Panc1 (cell line): ENCODE measurements at regions of chr14 and their contacts with region 1.

Region 1: GRCh38 chr14:30906752-30907658 is 32.6 kb downstream of the COCH start:
- DNase-seq: peak; percentile 4
- ATAC-seq: no peak
- H3K4me3 ChIP-seq: no peak overlapping the region
- H3K27ac ChIP-seq: no peak overlapping the region
- H3K4me1 ChIP-seq: no peaks in the 10 kb centered on the region
- H3K27me3 ChIP-seq: no peaks in the 10 kb centered on the region
- CTCF ChIP-seq: peak; percentile 19; the same call in 1 of the 2 replicates

Region 2: DNA sequence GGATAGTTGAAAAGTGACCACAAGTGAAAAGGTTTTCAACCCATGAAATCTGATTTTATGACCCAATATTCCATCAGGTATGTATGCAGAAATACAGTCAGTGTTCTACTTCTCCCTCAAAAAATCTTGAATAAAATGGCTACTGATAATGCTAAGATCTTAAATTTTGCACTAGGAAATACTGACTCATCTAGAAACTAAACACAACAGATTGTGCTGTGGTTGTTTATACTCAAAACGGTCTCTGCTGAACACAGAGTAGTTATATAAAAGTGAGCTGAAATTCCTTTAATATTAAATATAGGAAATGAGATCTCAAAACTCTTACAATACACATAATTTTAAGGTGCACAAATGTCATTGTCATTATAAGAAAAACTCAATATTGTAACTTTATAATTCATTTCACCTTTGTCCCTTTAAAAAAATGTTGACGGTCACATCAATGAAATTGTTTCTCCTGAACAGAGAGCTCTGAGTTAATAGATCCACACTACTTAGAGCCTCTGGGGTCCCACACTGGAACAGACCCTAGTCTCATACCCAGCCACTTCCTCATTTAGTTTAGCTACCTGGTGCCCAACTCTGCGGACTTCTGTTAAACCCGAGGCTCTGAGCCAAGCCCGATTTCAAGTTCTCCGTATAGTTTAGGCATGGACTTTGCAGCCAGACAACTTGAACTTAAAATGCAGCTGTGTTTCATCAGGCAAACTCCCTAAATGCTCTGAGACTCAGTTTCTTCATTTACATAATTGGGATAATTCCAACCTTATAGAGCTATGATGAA is 23.3 kb before region 1 on chr14:
- CTCF ChIA-PET with region 1: no interaction called
- POLR2A ChIA-PET with region 1: interaction called, 18 read pairs
- in situ Hi-C with region 1: no loop called
- intact Hi-C with region 1: no loop called
- DNase-seq: no peak
- ATAC-seq: no peak
- H3K4me3 ChIP-seq: no peak overlapping the region
- H3K27ac ChIP-seq: no peak overlapping the region
- H3K4me1 ChIP-seq: no peaks in the 10 kb centered on the region
- H3K27me3 ChIP-seq: no peaks in the 10 kb centered on the region
- CTCF ChIP-seq: no peak